Heart right ventricle (tissue), 16 donors: ENCODE measurements at regions of chr6 and their contacts with region 1.

Region 1: GRCh38 chr6:133548414-133549159 is 307.4 kb downstream of the EYA4 start:
- DNase-seq: no peak
- ATAC-seq: no peak
- H3K4me3 ChIP-seq: no peak overlapping the region
- H3K27ac ChIP-seq: no peak overlapping the region
- H3K4me1 ChIP-seq: peaks cover 0 to 21% (median 6%) of the 10 kb centered on the region in 9 donors
- H3K27me3 ChIP-seq: no peaks in the 10 kb centered on the region
- CTCF ChIP-seq: no peak

Region 2: DNA sequence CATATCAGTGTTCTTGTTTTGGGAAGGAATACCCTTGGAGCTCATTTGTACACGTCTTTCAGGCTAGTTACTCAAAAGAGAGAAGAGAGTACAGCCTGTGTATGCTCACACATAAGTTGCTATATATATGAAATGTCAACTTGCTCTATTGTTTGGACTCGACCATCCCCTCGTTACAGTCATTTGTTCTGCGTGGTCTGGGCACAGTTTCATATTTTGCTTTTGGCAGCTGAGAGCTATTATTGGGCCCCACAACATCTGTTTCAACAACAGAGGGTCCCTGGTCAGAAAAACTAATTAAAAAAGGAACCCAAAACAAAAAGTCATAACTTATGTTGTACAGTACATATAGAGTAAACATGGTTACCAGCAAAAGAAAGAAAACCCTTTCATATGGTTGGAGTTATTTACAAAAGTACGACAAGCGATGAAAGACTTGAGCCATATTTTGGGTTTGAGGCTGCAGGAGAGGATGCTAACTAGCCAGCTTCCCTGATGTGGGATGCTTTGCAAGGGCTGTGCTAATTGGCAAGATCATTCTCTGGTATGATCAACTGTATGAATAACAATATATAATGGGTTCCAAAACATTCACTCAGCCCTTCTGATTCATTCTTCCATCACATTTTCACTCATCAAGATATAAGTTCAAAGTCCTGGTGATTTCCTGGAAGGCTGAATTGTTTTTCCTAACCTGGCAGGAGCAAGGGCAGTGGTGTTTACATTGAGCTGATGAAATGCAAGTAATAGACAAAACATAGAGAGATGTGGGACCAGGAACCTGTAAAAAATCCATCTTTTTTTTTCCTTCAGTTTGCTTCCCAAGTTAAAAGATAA is 596.3 kb before region 1 on chr6:
- intact Hi-C with region 1: loop called in 1 of 10 experiments (anchors 10 kb)
- DNase-seq: no peak
- ATAC-seq: no peak
- H3K4me3 ChIP-seq: no peak overlapping the region
- H3K27ac ChIP-seq: no peak overlapping the region
- H3K4me1 ChIP-seq: peaks cover 0 to 6% (median 0%) of the 10 kb centered on the region in 9 donors
- H3K27me3 ChIP-seq: no peaks in the 10 kb centered on the region
- CTCF ChIP-seq: no peak